ENCODE measurements at regions of chr1 and their contacts with region 1.

Region 1: DNA sequence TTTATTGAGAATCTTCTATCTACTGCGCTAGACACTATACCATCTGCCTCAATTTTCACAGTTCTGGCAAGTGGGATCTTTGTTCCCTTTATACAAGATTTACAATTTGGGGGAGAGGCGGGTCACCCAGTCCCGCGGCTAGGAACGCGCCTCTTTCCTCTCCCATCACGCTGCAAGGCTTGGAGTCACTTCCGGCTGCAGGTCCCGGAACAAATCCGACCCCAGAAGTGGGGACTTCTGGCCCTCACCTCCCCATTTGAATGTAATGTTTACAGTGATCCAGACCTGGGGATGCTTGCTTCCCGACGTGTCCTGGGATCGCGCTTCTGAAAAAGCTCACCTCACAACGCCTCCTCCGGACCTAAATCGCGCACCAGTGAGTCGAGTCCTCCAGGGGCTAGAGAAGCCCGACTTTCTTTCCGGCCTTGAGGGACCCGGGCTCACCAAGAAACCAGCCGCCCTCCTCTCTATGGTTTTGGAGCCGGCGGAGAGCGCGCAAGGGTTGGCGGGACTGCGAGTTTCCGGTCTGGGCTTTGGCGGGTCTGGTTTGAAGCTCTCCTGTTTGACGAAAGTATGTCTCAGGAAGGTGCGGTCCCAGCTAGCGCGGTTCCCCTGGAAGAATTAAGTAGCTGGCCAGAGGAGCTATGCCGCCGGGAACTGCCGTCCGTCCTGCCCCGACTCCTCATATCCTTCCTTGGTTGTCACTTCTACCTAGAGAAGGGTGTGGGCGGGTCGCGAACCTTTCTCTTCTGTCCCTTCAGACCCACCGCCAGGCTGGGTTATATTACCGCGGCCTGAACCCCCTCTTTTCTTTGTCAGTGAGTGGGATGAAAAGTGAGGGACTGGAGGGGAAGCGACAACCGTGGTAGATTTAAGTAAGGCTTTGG is at the start of gene METTL18:
- DNase-seq: peak; percentile 96
- ATAC-seq: peak; percentile 99
- H3K4me3 ChIP-seq: peak within 1 kb of the TSS; percentile 70 to 99 (median 94)
- H3K4me3 Mint-ChIP-seq: peak within 1 kb of the TSS; percentile 96
- H3K27ac ChIP-seq: peak within 1 kb of the TSS; percentile 72 to 91
- H3K27ac Mint-ChIP-seq: peak within 1 kb of the TSS; percentile 96
- H3K4me1 ChIP-seq: peaks cover 15 to 16% of the 10 kb centered on the region in 2 donors
- H3K4me1 Mint-ChIP-seq: peaks cover 45% of the 10 kb centered on the region
- H3K27me3 ChIP-seq: no peaks in the 10 kb centered on the region
- H3K27me3 Mint-ChIP-seq: no peaks in the 10 kb centered on the region
- CTCF ChIP-seq: no peak
- total RNA-seq, gene METTL18: 16.9 and 18.9 TPM in 2 replicates

Region 2: DNA sequence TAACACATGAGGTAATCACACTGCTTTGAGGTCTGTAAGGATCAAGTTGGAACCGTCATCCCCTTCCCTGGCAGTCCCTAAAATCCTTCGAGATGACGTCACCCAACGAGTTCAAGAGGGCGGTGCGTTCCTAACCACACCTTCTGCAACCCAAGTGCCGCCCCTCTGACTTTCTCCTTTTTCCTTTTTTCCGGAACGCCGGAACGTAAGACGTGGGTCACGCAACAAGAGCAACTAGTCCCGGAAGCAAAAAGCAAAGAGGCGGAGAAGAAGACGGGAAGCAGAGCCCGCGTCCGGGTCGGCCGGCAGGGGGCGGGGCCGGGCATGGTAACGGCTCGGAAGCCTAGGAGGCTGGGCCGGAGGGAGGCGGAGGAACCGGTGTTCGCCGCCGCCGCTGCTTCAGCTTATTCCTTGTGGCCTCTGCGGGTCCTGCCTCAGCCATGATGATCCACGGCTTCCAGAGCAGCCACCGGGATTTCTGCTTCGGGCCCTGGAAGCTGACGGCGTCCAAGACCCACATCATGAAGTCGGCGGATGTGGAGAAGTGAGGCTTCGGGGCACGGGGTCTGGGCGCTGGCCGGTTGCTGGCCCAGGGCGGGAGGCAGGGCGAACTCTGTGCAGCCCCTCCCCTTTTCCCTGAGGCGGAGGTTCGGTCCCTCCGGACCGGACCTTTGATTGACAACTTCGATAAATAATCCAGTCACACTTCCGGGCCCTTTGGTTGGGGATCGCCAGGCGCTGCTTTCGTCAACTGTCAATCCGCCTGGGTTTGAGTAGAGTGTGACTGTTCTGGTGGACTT is 1615.9 kb before region 1 on chr1 and contains the start of gene TIPRL:
- CTCF ChIA-PET with region 1: no interaction called
- POLR2A ChIA-PET with region 1: no interaction called
- intact Hi-C with region 1: loop called (anchors 2 kb)
- DNase-seq: peak; percentile 96
- ATAC-seq: peak; percentile 92
- H3K4me3 ChIP-seq: peak within 1 kb of the TSS; percentile 87 to 97 (median 91)
- H3K4me3 Mint-ChIP-seq: peak within 1 kb of the TSS; percentile 47
- H3K27ac ChIP-seq: peak within 1 kb of the TSS; percentile 83 to 98
- H3K27ac Mint-ChIP-seq: peak within 1 kb of the TSS; percentile 15
- H3K4me1 ChIP-seq: peaks cover 17 to 18% of the 10 kb centered on the region in 2 donors
- H3K4me1 Mint-ChIP-seq: peaks cover 1% of the 10 kb centered on the region
- H3K27me3 ChIP-seq: peaks cover 0 to 5% (median 0%) of the 10 kb centered on the region in 4 experiments
- H3K27me3 Mint-ChIP-seq: peaks cover 4% of the 10 kb centered on the region
- CTCF ChIP-seq: peak; percentile 73
- total RNA-seq, gene TIPRL: 22.7 and 24.9 TPM in 2 replicates

Region 3: DNA sequence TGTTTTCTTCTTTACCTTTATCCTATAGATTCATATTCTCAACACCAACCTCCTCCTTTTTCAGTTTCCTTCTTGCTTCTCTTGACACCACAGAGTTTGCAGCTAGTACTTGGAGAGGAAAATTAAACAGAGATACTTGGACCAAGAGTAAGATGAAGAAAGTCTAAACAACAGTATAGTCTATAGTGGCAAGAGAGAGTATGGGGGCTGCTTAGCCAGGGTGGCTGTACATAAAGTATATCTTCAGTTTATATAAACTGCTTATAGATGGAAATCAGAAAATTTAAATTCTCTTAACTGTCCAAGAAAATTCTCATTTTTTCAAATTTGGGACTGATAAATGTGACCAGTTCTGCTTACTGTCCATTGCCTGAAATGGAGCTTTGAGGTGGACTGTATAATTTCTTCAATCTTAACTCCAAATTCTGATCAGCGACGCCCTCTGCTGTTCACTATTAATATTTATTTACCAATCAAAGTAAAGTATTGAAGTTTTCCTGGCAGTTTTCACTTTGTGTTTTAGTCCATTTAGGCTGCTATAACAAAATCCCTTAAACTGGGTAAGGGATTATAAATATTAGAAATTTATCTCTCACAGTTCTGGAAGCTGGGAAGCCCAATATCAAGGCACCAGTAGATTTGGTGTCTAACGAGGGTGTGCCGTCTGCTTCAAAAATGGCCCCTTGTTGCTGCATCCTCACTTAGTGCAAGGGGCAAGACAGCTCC is 14.8 kb after region 1 on chr1:
- CTCF ChIA-PET with region 1: interaction called, 11 read pairs
- POLR2A ChIA-PET with region 1: no interaction called
- intact Hi-C with region 1: loop called (anchors 2 kb)
- DNase-seq: peak; percentile 62
- ATAC-seq: no peak
- H3K4me3 ChIP-seq: no peak overlapping the region
- H3K4me3 Mint-ChIP-seq: no peak overlapping the region
- H3K27ac ChIP-seq: no peak overlapping the region
- H3K27ac Mint-ChIP-seq: no peak overlapping the region
- H3K4me1 ChIP-seq: no peaks in the 10 kb centered on the region
- H3K4me1 Mint-ChIP-seq: no peaks in the 10 kb centered on the region
- H3K27me3 ChIP-seq: no peaks in the 10 kb centered on the region
- H3K27me3 Mint-ChIP-seq: no peaks in the 10 kb centered on the region
- CTCF ChIP-seq: peak; percentile 81

Region 4: DNA sequence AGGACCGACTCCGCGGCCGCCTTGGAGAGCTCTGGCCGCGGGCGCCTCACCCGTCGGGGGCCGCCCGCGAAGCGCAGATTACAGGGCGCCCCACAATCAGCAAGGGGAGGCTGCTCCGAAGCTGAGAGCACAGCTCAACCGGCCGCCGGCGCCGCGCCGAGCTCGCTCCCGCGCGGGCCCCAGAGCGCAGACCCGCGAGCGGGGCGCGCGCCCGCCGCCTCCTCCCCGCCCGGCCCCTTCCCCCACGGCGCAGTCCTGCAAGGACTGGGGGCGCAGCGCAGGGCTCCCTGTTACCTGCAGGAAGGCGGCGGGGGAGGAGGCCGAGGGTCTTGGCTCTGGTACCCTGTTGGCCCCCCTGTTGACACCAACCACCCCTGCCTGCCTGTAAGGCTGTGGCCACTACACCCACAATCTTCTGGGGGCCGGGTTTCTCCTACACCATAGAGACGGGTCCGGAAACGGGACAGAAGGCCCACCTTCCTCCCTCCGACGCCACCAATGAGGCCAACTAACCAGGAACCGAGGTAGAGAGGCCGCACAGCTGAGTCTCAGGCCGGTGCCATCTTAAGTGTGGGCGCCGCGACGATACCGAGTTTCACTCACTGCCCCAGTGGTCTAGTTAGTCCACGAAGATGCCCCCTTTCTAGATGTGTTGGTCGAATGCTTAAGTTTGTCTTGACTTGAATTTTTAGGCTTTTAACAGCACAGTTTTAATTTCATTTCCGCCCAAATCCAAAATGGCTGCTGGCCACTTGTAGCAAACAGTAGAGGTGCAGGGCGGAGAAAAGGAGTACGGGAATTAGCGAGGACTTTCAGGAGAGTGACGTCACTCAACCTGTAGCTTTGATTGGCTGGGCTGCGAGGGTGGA is 99.0 kb after region 1 on chr1 and contains the start of gene SCYL3:
- CTCF ChIA-PET with region 1: interaction called, 5 read pairs
- POLR2A ChIA-PET with region 1: interaction called, 15 read pairs
- intact Hi-C with region 1: loop called (anchors 1 kb)
- DNase-seq: peak; percentile 99
- ATAC-seq: peak; percentile 88
- H3K4me3 ChIP-seq: peak within 1 kb of the TSS; percentile 81 to 96 (median 85)
- H3K4me3 Mint-ChIP-seq: peak within 1 kb of the TSS; percentile 98
- H3K27ac ChIP-seq: peak within 1 kb of the TSS; percentile 97
- H3K27ac Mint-ChIP-seq: peak within 1 kb of the TSS; percentile 100
- H3K4me1 ChIP-seq: peaks cover 25 to 32% of the 10 kb centered on the region in 2 donors
- H3K4me1 Mint-ChIP-seq: peaks cover 44% of the 10 kb centered on the region
- H3K27me3 ChIP-seq: peaks cover 0 to 3% (median under 1%) of the 10 kb centered on the region in 4 experiments
- H3K27me3 Mint-ChIP-seq: peaks cover 15% of the 10 kb centered on the region
- CTCF ChIP-seq: no peak
- total RNA-seq, gene SCYL3: 17.6 and 18.4 TPM in 2 replicates

Region 5: GRCh38 chr1:169964206-169964605 is 169.4 kb after region 1 on chr1:
- CTCF ChIA-PET with region 1: no interaction called
- POLR2A ChIA-PET with region 1: no interaction called
- intact Hi-C with region 1: no loop called
- DNase-seq: no peak
- ATAC-seq: no peak
- H3K4me3 ChIP-seq: no peak overlapping the region
- H3K4me3 Mint-ChIP-seq: no peak overlapping the region
- H3K27ac ChIP-seq: no peak overlapping the region
- H3K27ac Mint-ChIP-seq: no peak overlapping the region
- H3K4me1 ChIP-seq: no peaks in the 10 kb centered on the region
- H3K4me1 Mint-ChIP-seq: no peaks in the 10 kb centered on the region
- H3K27me3 ChIP-seq: no peaks in the 10 kb centered on the region
- H3K27me3 Mint-ChIP-seq: no peaks in the 10 kb centered on the region
- CTCF ChIP-seq: no peak

Region 6: GRCh38 chr1:170074250-170075157 is 279.7 kb after region 1 on chr1 and contains the start of gene KIFAP3:
- CTCF ChIA-PET with region 1: no interaction called
- POLR2A ChIA-PET with region 1: no interaction called
- intact Hi-C with region 1: loop called (anchors 2 kb)
- DNase-seq: peak; percentile 98
- ATAC-seq: peak; percentile 93
- H3K4me3 ChIP-seq: peak within 1 kb of the TSS; percentile 43 to 78 (median 66)
- H3K4me3 Mint-ChIP-seq: peak within 1 kb of the TSS; percentile 92
- H3K27ac ChIP-seq: peak within 1 kb of the TSS; percentile 63 to 84
- H3K27ac Mint-ChIP-seq: peak within 1 kb of the TSS; percentile 95
- H3K4me1 ChIP-seq: peaks cover 19 to 20% of the 10 kb centered on the region in 2 donors
- H3K4me1 Mint-ChIP-seq: peaks cover 44% of the 10 kb centered on the region
- H3K27me3 ChIP-seq: no peaks in the 10 kb centered on the region
- H3K27me3 Mint-ChIP-seq: peaks cover 11% of the 10 kb centered on the region
- CTCF ChIP-seq: peak; percentile 52
- total RNA-seq, gene KIFAP3: 14.1 and 14.9 TPM in 2 replicates

Region 7: GRCh38 chr1:170531758-170532657 is 737.2 kb after region 1 on chr1 and contains the start of gene GORAB:
- CTCF ChIA-PET with region 1: no interaction called
- POLR2A ChIA-PET with region 1: no interaction called
- intact Hi-C with region 1: loop called (anchors 5 kb)
- DNase-seq: peak; percentile 91
- ATAC-seq: peak; percentile 97
- H3K4me3 ChIP-seq: peak within 1 kb of the TSS; percentile 72 to 95 (median 89)
- H3K4me3 Mint-ChIP-seq: no peak within 1 kb of the TSS
- H3K27ac ChIP-seq: peak within 1 kb of the TSS; percentile 82 to 92
- H3K27ac Mint-ChIP-seq: no peak within 1 kb of the TSS
- H3K4me1 ChIP-seq: peaks cover 12 to 17% of the 10 kb centered on the region in 2 donors
- H3K4me1 Mint-ChIP-seq: peaks cover 13% of the 10 kb centered on the region
- H3K27me3 ChIP-seq: no peaks in the 10 kb centered on the region
- H3K27me3 Mint-ChIP-seq: no peaks in the 10 kb centered on the region
- CTCF ChIP-seq: no peak
- total RNA-seq, gene GORAB: 24.2 and 32.5 TPM in 2 replicates

Measured in B cell (primary cell).